CD14-positive monocyte (primary cell): ENCODE measurements at regions of chr10 and their contacts with region 1.

Region 1: DNA sequence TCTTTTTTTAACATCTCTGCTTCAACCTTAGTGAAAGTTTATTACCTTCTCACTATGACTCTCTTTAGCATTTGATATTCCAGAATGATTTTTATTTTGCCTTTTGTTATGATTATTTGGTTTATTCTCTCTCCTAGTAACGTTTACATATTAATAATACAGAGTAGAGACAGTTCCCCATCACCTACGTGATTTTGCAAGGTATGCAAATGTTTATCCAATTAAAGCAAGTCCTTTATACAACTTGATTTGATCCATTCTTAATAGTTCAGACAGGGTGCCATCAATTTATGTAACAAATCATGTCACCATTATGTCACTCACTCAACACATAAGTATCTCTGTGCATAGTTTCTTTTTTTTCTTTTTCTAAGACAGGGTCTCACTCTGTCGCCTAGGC is 26.2 kb downstream of the ECD start:
- DNase-seq: no peak
- H3K4me3 ChIP-seq: no peak overlapping the region
- H3K4me3 Mint-ChIP-seq: no peak overlapping the region
- H3K27ac ChIP-seq: no peak overlapping the region
- H3K27ac Mint-ChIP-seq: no peak overlapping the region
- H3K4me1 ChIP-seq: no peaks in the 10 kb centered on the region
- H3K4me1 Mint-ChIP-seq: no peaks in the 10 kb centered on the region
- H3K27me3 ChIP-seq: no peaks in the 10 kb centered on the region
- H3K27me3 Mint-ChIP-seq: peaks cover 0 to 2% (median 0%) of the 10 kb centered on the region in 3 donors
- CTCF ChIP-seq: no peak

Region 2: DNA sequence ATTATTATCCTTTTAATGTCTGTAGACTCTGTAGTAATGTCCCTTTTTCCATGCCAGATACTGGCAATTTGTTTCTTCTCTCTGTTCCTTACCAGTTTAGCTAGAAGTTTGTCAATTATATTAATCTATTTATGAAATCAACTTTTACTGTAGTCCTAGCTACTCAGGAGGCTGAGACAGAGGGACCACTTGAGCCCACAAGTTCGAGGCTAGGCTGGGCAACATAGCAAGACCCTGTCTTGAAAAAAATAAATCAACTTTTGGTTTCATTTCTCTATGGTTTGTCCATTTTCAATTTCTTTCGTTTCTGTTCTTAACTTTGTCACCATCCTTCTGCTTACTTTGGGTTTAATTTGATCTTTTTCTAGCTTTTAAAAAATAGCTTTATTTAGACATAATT is 144.5 kb before region 1 on chr10:
- intact Hi-C with region 1: no loop called
- DNase-seq: no peak
- H3K4me3 ChIP-seq: no peak overlapping the region
- H3K4me3 Mint-ChIP-seq: no peak overlapping the region
- H3K27ac ChIP-seq: no peak overlapping the region
- H3K27ac Mint-ChIP-seq: no peak overlapping the region
- H3K4me1 ChIP-seq: no peaks in the 10 kb centered on the region
- H3K4me1 Mint-ChIP-seq: no peaks in the 10 kb centered on the region
- H3K27me3 ChIP-seq: no peaks in the 10 kb centered on the region
- H3K27me3 Mint-ChIP-seq: peaks cover 0 to 1% (median 0%) of the 10 kb centered on the region in 3 donors
- CTCF ChIP-seq: no peak

Region 3: GRCh38 chr10:73017955-73018480 is 123.6 kb before region 1 on chr10:
- intact Hi-C with region 1: no loop called
- DNase-seq: no peak
- H3K4me3 ChIP-seq: no peak overlapping the region
- H3K4me3 Mint-ChIP-seq: no peak overlapping the region
- H3K27ac ChIP-seq: no peak overlapping the region
- H3K27ac Mint-ChIP-seq: no peak overlapping the region
- H3K4me1 ChIP-seq: no peaks in the 10 kb centered on the region
- H3K4me1 Mint-ChIP-seq: no peaks in the 10 kb centered on the region
- H3K27me3 ChIP-seq: no peaks in the 10 kb centered on the region
- H3K27me3 Mint-ChIP-seq: no peaks in the 10 kb centered on the region
- CTCF ChIP-seq: no peak

Region 4: DNA sequence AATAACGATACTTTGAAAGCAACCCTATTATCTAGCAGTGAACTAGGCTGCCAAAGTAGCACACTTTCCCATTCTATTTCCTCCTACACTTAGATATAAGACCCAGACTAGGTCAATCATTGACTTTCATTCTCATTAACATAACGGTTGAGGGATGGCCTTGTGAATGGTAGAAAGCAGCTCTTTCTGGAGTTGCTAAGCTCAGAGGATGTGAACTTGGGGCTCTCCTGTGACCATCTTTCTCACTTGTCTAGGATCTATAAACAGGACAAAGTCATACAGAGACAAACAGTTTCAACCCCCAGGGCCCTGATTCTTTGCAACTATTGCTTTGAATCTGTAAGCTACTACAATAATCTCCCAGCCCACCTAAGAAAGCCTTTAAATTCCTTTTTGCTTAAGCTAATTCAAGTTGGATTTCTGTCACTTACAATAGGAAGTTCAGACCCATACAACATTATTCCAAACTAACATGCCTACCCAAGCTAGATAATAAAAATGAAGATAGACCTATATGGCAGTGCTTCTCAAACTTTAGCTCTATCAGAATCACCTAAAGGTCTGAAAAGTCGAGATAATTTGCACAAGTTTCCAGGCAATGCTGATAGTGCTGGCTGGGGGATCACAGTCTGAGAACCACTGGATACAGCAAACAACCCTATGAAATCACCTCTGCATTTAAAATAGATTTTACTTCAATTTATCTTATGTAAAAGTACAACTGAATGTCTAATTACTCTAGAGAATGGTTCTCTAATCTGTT is 61.6 kb before region 1 on chr10:
- intact Hi-C with region 1: no loop called
- DNase-seq: no peak
- H3K4me3 ChIP-seq: no peak overlapping the region
- H3K4me3 Mint-ChIP-seq: no peak overlapping the region
- H3K27ac ChIP-seq: no peak overlapping the region
- H3K27ac Mint-ChIP-seq: no peak overlapping the region
- H3K4me1 ChIP-seq: peaks cover 3 to 10% of the 10 kb centered on the region in 2 donors
- H3K4me1 Mint-ChIP-seq: peaks cover 13% of the 10 kb centered on the region
- H3K27me3 ChIP-seq: no peaks in the 10 kb centered on the region
- H3K27me3 Mint-ChIP-seq: peaks cover 0 to 2% (median 0%) of the 10 kb centered on the region in 3 donors
- CTCF ChIP-seq: no peak

Region 5: GRCh38 chr10:73096449-73097304 is 44.9 kb before region 1 on chr10 and contains the start of gene P4HA1:
- intact Hi-C with region 1: loop called in 1 of 2 experiments (anchors 10 kb)
- DNase-seq: peak; percentile 98 to 99 (median 99)
- H3K4me3 ChIP-seq: peak within 1 kb of the TSS; percentile 58 to 98 (median 93)
- H3K4me3 Mint-ChIP-seq: peak within 1 kb of the TSS; percentile 95 to 96
- H3K27ac ChIP-seq: peak within 1 kb of the TSS; percentile 92 to 96
- H3K27ac Mint-ChIP-seq: peak within 1 kb of the TSS; percentile 87 to 97 (median 95)
- H3K4me1 ChIP-seq: peaks cover 13 to 21% of the 10 kb centered on the region in 2 donors
- H3K4me1 Mint-ChIP-seq: peaks cover 23% of the 10 kb centered on the region
- H3K27me3 ChIP-seq: no peaks in the 10 kb centered on the region
- H3K27me3 Mint-ChIP-seq: no peaks in the 10 kb centered on the region
- CTCF ChIP-seq: peak; percentile 79
- polyA plus RNA-seq, gene P4HA1: 20.1 to 44.3 (median 43.9) TPM

Region 6: GRCh38 chr10:73246783-73247508 is 105.3 kb after region 1 on chr10 and contains the start of gene DNAJC9:
- intact Hi-C with region 1: no loop called
- DNase-seq: peak; percentile 84 to 92 (median 92)
- H3K4me3 ChIP-seq: peak within 1 kb of the TSS; percentile 69 to 92 (median 71)
- H3K4me3 Mint-ChIP-seq: peak within 1 kb of the TSS; percentile 91 to 96
- H3K27ac ChIP-seq: peak within 1 kb of the TSS; percentile 51 to 83
- H3K27ac Mint-ChIP-seq: peak within 1 kb of the TSS; percentile 81 to 94 (median 90)
- H3K4me1 ChIP-seq: peaks cover 33 to 53% of the 10 kb centered on the region in 2 donors
- H3K4me1 Mint-ChIP-seq: peaks cover 50% of the 10 kb centered on the region
- H3K27me3 ChIP-seq: no peaks in the 10 kb centered on the region
- H3K27me3 Mint-ChIP-seq: peaks cover 0 to 2% (median 0%) of the 10 kb centered on the region in 3 donors
- CTCF ChIP-seq: no peak
- polyA plus RNA-seq, gene DNAJC9: 2.3 to 7.2 (median 2.4) TPM